GM12878 (cell line): ENCODE measurements at regions of chr17 and their contacts with region 1.

Region 1: DNA sequence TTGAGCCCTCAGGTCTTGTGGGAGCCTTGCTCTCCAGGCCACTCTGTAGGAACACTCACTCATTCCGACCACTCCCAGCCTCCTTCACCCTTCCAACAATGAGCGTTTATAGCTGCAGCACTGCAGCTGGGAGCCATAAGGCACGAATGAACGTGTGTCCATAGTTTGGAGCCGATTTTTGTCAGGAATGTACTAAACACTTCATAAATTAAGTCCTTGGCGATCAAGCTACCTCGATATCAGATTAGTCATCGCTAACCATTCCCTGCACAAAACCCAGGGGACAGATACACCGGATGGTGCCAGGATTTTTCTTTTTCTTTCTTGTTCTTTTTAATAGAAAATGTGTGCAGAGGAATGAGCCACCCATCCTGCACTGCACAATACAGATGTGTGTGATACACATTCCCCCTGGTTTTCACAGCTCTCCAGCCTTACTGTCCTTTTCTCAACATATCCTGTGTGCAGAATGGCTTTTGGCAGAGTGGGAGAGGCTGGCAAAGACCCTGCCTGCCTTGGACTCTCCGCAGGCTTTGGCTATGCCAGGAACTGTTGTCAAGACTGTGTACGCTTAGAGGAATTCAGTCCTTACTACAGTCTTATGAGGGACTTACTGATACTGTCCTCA is 68.4 kb upstream of the ELAC2 start:
- DNase-seq: no peak
- ATAC-seq: no peak
- H3K4me3 ChIP-seq: no peak overlapping the region
- H3K27ac ChIP-seq: no peak overlapping the region
- H3K4me1 ChIP-seq: no peaks in the 10 kb centered on the region
- H3K27me3 ChIP-seq: no peaks in the 10 kb centered on the region
- CTCF ChIP-seq: no peak
- EP300 ChIP-seq: no peak
- POLR2A ChIP-seq: no peak
- RAD21 ChIP-seq: no peak

Region 2: GRCh38 chr17:12800855-12801365 is 285.3 kb before region 1 on chr17:
- CTCF ChIA-PET with region 1: no interaction called
- POLR2A ChIA-PET with region 1: no interaction called
- RAD21 ChIA-PET with region 1: no interaction called
- SMC1A ChIA-PET with region 1: no interaction called
- in situ Hi-C with region 1: no loop called
- intact Hi-C with region 1: no loop called
- DNase-seq: no peak
- ATAC-seq: no peak
- H3K4me3 ChIP-seq: no peak overlapping the region
- H3K27ac ChIP-seq: no peak overlapping the region
- H3K4me1 ChIP-seq: peaks cover 6% of the 10 kb centered on the region; the same call in 1 of the 2 replicates
- H3K27me3 ChIP-seq: no peaks in the 10 kb centered on the region
- CTCF ChIP-seq: no peak
- EP300 ChIP-seq: no peak
- POLR2A ChIP-seq: no peak
- RAD21 ChIP-seq: no peak

Region 3: DNA sequence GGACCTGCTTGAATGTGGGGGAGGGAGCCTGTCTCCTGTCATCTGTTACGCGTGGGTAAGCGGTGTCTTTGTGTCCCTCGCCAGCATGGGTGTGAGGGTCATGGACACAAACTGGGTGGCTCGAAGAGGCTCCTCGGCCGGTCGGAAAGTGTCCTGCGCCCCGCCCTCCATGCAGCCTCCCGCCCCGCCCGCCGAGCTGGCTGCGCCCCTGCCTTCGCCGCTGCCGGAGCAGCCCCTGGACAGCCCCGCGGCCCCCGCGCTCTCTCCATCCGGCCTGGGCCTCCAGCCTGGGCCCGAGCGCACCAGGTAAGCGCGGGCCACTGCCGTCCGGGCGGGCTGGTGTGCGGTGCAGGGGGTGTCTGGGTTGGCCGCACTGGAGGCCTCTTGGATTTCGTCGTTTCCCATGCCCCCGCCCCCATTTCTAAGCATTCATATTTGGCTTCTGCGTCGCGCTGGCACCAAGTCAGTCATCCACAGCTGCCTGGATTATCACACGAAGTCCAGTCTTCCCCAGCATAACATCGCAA is 112.2 kb before region 1 on chr17:
- CTCF ChIA-PET with region 1: no interaction called
- POLR2A ChIA-PET with region 1: no interaction called
- RAD21 ChIA-PET with region 1: no interaction called
- SMC1A ChIA-PET with region 1: no interaction called
- in situ Hi-C with region 1: no loop called
- intact Hi-C with region 1: no loop called
- DNase-seq: no peak
- ATAC-seq: no peak
- H3K4me3 ChIP-seq: no peak overlapping the region
- H3K27ac ChIP-seq: no peak overlapping the region
- H3K4me1 ChIP-seq: no peaks in the 10 kb centered on the region
- H3K27me3 ChIP-seq: no peaks in the 10 kb centered on the region
- CTCF ChIP-seq: no peak
- EP300 ChIP-seq: no peak
- POLR2A ChIP-seq: no peak
- RAD21 ChIP-seq: no peak

Region 4: GRCh38 chr17:13073018-13073417 is 13.2 kb before region 1 on chr17:
- CTCF ChIA-PET with region 1: interaction called, 5 read pairs
- POLR2A ChIA-PET with region 1: no interaction called
- RAD21 ChIA-PET with region 1: interaction called, 3 read pairs
- SMC1A ChIA-PET with region 1: interaction called, 10 read pairs
- in situ Hi-C with region 1: no loop called
- intact Hi-C with region 1: no loop called
- DNase-seq: no peak
- ATAC-seq: peak; percentile 70
- H3K4me3 ChIP-seq: no peak overlapping the region; the same call in 1 of the 2 replicates
- H3K27ac ChIP-seq: no peak overlapping the region
- H3K4me1 ChIP-seq: no peaks in the 10 kb centered on the region
- H3K27me3 ChIP-seq: no peaks in the 10 kb centered on the region
- CTCF ChIP-seq: no peak
- EP300 ChIP-seq: no peak
- POLR2A ChIP-seq: no peak
- RAD21 ChIP-seq: no peak

Region 5: GRCh38 chr17:13129356-13129755 is 43.1 kb after region 1 on chr17:
- CTCF ChIA-PET with region 1: no interaction called
- POLR2A ChIA-PET with region 1: no interaction called
- RAD21 ChIA-PET with region 1: no interaction called
- SMC1A ChIA-PET with region 1: no interaction called
- in situ Hi-C with region 1: no loop called
- intact Hi-C with region 1: no loop called
- DNase-seq: no peak
- ATAC-seq: no peak
- H3K4me3 ChIP-seq: no peak overlapping the region
- H3K27ac ChIP-seq: no peak overlapping the region
- H3K4me1 ChIP-seq: no peaks in the 10 kb centered on the region
- H3K27me3 ChIP-seq: no peaks in the 10 kb centered on the region
- CTCF ChIP-seq: no peak
- EP300 ChIP-seq: no peak
- POLR2A ChIP-seq: no peak
- RAD21 ChIP-seq: no peak

Region 6: DNA sequence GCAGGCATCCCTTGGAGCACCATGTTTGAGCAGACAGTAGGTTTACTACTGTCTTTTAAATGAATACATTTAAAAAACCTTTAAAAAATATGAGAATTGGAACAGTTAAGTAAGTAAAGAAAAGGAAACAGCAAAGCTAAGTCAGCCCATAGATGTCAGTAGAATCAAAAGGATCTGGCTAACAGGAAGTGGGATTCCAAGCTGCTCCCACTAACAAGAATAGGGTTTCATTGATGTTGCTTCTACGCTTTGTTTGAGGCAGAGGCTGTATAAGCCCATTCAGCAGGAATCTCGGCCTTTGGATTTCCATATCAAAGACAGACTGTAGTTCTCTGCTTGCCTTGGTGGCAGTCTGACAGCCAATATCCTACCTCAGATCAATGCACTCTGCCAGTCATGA is 54.5 kb after region 1 on chr17:
- CTCF ChIA-PET with region 1: no interaction called
- POLR2A ChIA-PET with region 1: no interaction called
- RAD21 ChIA-PET with region 1: no interaction called
- SMC1A ChIA-PET with region 1: no interaction called
- in situ Hi-C with region 1: no loop called
- intact Hi-C with region 1: loop called (anchors 10 kb)
- DNase-seq: no peak
- ATAC-seq: no peak
- H3K4me3 ChIP-seq: no peak overlapping the region
- H3K27ac ChIP-seq: no peak overlapping the region
- H3K4me1 ChIP-seq: no peaks in the 10 kb centered on the region
- H3K27me3 ChIP-seq: no peaks in the 10 kb centered on the region
- CTCF ChIP-seq: no peak
- EP300 ChIP-seq: no peak
- POLR2A ChIP-seq: no peak
- RAD21 ChIP-seq: no peak